H1 (cell line): ENCODE measurements at regions of chr9 and their contacts with region 1.

Region 1: DNA sequence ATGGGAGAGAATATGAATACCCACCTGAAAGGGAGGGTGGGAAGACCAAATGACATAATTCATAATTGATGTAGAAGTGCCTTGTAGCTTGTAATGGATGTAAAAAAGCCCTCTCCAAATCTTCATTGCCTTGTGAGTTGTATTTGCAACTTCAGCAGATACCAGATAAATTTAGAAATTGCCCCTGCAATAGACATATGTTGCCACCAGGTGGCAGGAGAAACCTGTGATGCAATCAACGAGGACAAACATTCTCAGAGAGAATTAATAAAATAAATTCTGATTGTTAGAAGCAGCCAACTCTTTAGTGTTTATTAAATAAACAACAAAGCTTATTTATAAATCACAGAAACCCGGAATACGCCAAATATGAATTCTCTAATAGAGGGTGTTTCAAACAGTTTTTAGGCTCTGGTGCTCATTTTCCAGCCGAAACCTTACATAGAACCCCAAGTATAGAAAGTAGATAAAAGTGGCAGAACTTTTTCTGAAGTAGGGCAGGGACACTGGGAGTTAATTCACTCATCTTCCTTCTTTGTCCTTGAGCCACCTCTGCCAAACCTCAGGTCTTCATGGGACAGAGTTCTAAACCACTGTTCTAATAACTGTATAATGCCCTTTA is 147.8 kb downstream of the TMEM38B start:
- DNase-seq: no peak
- H3K4me3 ChIP-seq: no peak overlapping the region
- H3K27ac ChIP-seq: no peak overlapping the region
- H3K4me1 ChIP-seq: no peaks in the 10 kb centered on the region
- H3K27me3 ChIP-seq: no peaks in the 10 kb centered on the region
- CTCF ChIP-seq: peak in 2 of 3 experiments; percentile 70 to 73; a peak in 3 of 4 replicates
- EP300 ChIP-seq: no peak
- POLR2A ChIP-seq: no peak
- RAD21 ChIP-seq: peak; percentile 89 to 92

Region 2: DNA sequence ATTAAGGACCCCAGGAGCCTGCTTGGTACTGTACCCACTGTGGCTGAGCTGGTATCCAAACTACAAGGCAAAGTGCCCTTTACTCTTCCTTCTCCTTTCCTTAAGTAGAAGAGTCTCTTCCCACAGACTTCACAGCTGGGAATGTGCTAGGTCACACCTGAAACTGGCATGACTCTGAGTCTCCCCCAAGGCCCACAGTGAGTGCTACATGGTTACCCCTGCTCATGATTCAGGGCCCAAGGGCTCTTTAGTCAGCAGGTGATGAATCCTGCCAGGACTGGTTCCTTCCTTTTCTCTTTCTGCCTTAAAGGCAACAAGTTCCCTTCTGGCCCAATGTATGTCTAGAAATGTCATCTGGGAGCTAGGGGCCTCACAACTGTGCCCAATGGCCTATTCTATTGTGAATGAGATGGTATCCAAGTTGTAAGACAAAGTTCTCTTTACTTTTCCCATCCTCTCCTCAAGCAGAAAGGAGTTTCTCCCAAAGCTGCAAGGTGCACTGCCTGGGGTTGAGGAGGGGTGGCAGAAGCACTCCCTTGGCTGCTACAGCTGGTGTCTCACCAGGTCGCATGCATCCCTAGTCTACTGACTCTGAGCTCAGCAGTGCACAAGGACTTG is 13.4 kb before region 1 on chr9:
- CTCF ChIA-PET with region 1: interaction called, 10 read pairs
- POLR2A ChIA-PET with region 1: no interaction called
- DNase-seq: no peak
- H3K4me3 ChIP-seq: no peak overlapping the region
- H3K27ac ChIP-seq: no peak overlapping the region
- H3K4me1 ChIP-seq: no peaks in the 10 kb centered on the region
- H3K27me3 ChIP-seq: no peaks in the 10 kb centered on the region
- CTCF ChIP-seq: no peak
- EP300 ChIP-seq: no peak
- POLR2A ChIP-seq: no peak
- RAD21 ChIP-seq: no peak

Region 3: GRCh38 chr9:105858006-105858690 is 16.0 kb after region 1 on chr9:
- CTCF ChIA-PET with region 1: interaction called, 23 read pairs
- POLR2A ChIA-PET with region 1: no interaction called
- DNase-seq: no peak
- H3K4me3 ChIP-seq: no peak overlapping the region
- H3K27ac ChIP-seq: no peak overlapping the region
- H3K4me1 ChIP-seq: no peaks in the 10 kb centered on the region
- H3K27me3 ChIP-seq: no peaks in the 10 kb centered on the region
- CTCF ChIP-seq: no peak
- EP300 ChIP-seq: no peak
- POLR2A ChIP-seq: no peak
- RAD21 ChIP-seq: no peak

Region 4: GRCh38 chr9:105871540-105871939 is 29.4 kb after region 1 on chr9:
- CTCF ChIA-PET with region 1: interaction called, 12 read pairs
- POLR2A ChIA-PET with region 1: no interaction called
- DNase-seq: no peak
- H3K4me3 ChIP-seq: no peak overlapping the region
- H3K27ac ChIP-seq: no peak overlapping the region
- H3K4me1 ChIP-seq: no peaks in the 10 kb centered on the region
- H3K27me3 ChIP-seq: no peaks in the 10 kb centered on the region
- CTCF ChIP-seq: no peak
- EP300 ChIP-seq: no peak
- POLR2A ChIP-seq: no peak
- RAD21 ChIP-seq: no peak